ENCODE measurements at regions of chr17 and their contacts with region 1.

Region 1: GRCh38 chr17:13594762-13595598 is 6.7 kb downstream of the HS3ST3A1 start:
- DNase-seq: peak; percentile 55 to 88 (median 67)
- ATAC-seq: peak; percentile 69
- H3K4me3 ChIP-seq: no peak overlapping the region
- H3K27ac ChIP-seq: peak overlapping the region; percentile 61
- H3K4me1 ChIP-seq: peaks cover 0 to 32% of the 10 kb centered on the region in 2 experiments; a peak in 2 of 5 replicates
- H3K27me3 ChIP-seq: no peaks in the 10 kb centered on the region
- CTCF ChIP-seq: peak; percentile 67 to 72 (median 71)
- EP300 ChIP-seq: 0 out of 2 replicates have a peak, but pooled peaks have one; percentile 34
- POLR2A ChIP-seq: no peak
- RAD21 ChIP-seq: peak; percentile 60 to 64

Region 2: DNA sequence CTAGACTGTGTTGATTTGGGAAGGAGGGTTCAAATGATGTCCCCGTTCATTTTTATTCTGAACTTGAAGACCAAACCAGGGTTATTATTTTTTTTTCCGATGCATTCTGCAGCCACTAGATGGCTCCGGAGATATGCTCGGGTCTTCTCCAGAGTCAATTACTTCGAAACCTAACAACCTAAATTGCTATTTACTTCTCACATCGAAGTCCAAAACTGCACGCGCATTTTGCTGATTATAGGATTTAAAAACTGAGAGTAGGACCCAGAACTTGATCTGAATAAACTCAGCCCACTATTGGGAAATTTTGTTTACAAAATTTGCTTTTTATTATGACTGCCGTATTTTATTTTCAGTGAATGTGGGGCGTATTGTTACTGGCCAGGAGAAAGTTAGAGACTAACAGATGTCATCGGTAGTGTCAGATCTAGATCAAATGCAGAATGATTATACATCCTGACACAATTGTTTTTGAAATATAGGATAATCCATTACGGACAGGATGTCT is 257.1 kb before region 1 on chr17:
- CTCF ChIA-PET with region 1: no interaction called
- POLR2A ChIA-PET with region 1: no interaction called
- in situ Hi-C with region 1: no loop called
- intact Hi-C with region 1: loop called (anchors 2 kb)
- DNase-seq: peak; percentile 11 to 65 (median 30)
- ATAC-seq: peak; percentile 72
- H3K4me3 ChIP-seq: peak overlapping the region; percentile 21; the same call in 1 of the 2 replicates
- H3K27ac ChIP-seq: peak overlapping the region; percentile 39; the same call in 1 of the 3 replicates
- H3K4me1 ChIP-seq: peaks cover 0 to 3% of the 10 kb centered on the region in 2 experiments; a peak in 3 of 5 replicates
- H3K27me3 ChIP-seq: no peaks in the 10 kb centered on the region
- CTCF ChIP-seq: peak; percentile 50 to 80 (median 55)
- EP300 ChIP-seq: no peak
- POLR2A ChIP-seq: no peak
- RAD21 ChIP-seq: peak; percentile 75 to 79

Region 3: DNA sequence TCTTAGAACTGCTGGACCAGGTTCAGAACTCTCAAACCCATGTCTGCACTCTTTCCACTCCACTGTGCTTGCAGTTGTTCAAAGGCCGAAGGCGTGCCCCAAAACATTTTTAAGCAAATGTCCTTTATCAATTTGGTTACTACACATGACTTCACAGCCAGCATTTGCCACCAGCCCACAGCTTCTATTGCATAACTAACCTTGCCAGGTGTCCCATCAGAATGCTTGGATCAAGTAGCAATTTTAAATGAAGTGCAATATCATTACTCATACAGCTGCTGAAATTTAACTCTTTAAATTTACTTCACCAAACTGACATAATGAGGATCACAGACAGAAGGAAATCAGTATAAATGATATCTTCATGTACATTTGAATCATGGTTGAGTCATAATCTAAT is 36.5 kb after region 1 on chr17:
- CTCF ChIA-PET with region 1: no interaction called
- POLR2A ChIA-PET with region 1: no interaction called
- in situ Hi-C with region 1: no loop called
- intact Hi-C with region 1: no loop called
- DNase-seq: no peak
- ATAC-seq: no peak
- H3K4me3 ChIP-seq: no peak overlapping the region
- H3K27ac ChIP-seq: no peak overlapping the region
- H3K4me1 ChIP-seq: no peaks in the 10 kb centered on the region
- H3K27me3 ChIP-seq: no peaks in the 10 kb centered on the region; a peak in 2 of 5 replicates
- CTCF ChIP-seq: no peak
- EP300 ChIP-seq: no peak
- POLR2A ChIP-seq: no peak
- RAD21 ChIP-seq: no peak

Region 4: DNA sequence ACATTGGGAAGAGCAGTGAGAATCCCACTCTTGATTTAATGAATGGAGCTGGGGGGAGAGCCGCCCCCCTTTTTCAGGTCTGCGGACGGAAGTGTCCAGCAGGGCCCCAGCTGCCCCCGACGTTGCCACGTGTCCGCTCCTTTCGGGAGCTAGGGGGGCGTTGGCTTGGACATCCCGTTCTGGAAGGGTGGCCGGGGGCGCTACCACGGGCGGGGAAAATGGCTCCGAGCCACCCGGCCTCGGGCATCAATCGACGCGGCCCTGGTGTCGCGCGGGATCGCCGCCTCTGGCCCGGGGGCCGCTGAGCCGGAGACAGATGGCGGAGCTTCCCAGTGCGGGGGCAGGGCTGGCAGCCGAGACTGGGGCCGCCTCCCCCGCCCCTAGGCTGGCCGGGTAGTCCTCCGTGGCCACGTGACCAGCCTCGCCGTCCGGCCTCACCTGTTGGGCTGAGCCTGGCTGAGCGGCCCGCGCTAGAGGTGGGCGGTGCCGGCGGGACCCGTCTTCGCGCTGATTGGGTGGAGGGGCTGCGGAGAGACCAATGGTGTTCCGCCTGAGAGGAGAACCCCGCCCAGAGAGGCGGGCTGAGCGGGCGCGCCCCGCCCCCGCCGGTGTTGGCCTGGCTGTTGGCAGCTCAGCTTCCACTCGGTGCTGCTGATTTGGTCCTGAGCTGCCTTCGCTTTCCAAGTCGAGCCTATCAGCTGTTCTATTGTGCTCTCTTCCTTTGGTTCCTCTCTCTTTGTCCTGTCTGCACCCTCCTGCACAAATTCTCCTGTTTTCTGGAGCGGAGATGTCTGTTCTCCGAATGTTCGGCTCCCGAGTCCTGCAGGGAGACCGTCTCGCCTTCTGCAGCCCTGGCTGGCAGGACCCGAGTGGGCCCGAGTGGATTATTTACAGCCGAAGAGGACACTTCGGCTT is 714.2 kb after region 1 on chr17:
- CTCF ChIA-PET with region 1: no interaction called
- POLR2A ChIA-PET with region 1: no interaction called
- in situ Hi-C with region 1: no loop called
- intact Hi-C with region 1: loop called (anchors 5 kb)
- DNase-seq: peak; percentile 94 to 97 (median 95)
- ATAC-seq: peak; percentile 98
- H3K4me3 ChIP-seq: peak overlapping the region; percentile 52
- H3K27ac ChIP-seq: peak overlapping the region; percentile 84
- H3K4me1 ChIP-seq: peaks cover 17 to 29% of the 10 kb centered on the region in 2 experiments; a peak in 4 of 5 replicates
- H3K27me3 ChIP-seq: no peaks in the 10 kb centered on the region
- CTCF ChIP-seq: no peak
- EP300 ChIP-seq: no peak
- POLR2A ChIP-seq: peak; percentile 73; the same call in 1 of the 2 replicates
- RAD21 ChIP-seq: no peak